Naive thymus-derived CD4-positive, alpha-beta T cell (primary cell): ENCODE measurements at regions of chr4 and their contacts with region 1.

Region 1: GRCh38 chr4:102826890-102827673 is at the start of gene UBE2D3:
- DNase-seq: peak; percentile 92 to 97 (median 95)
- ATAC-seq: peak; percentile 72
- H3K4me3 ChIP-seq: peak within 1 kb of the TSS; percentile 82
- H3K4me3 Mint-ChIP-seq: no peak within 1 kb of the TSS
- H3K27ac ChIP-seq: peak within 1 kb of the TSS; percentile 99
- H3K27ac Mint-ChIP-seq: no peak within 1 kb of the TSS
- H3K4me1 ChIP-seq: peaks cover 19 to 24% of the 10 kb centered on the region in 2 donors
- H3K4me1 Mint-ChIP-seq: peaks cover 24 to 46% (median 40%) of the 10 kb centered on the region in 7 donors
- H3K27me3 ChIP-seq: no peaks in the 10 kb centered on the region
- H3K27me3 Mint-ChIP-seq: peaks cover 0 to 2% (median 0%) of the 10 kb centered on the region in 5 donors
- total RNA-seq, gene UBE2D3: 339 to 556 (median 413) TPM

Region 2: DNA sequence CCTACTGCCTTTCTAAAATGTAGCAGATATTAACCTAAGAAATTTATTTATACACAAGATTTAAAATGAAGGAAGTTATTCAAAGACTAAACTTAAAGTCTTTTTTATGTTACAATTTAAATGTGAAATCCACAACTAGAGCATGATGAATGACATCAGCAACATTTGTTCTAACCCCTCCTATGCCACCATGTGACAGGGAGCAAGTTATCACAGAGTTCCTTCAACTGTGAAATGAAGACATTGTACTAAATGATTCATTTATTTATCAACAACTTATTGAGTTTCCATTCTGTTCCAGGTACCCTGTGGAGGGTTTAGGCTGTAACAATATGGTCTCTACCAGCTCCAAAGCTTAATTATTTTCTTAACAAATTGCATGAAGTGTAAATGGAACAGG is 558.7 kb before region 1 on chr4:
- CTCF ChIA-PET with region 1: no interaction called
- POLR2A ChIA-PET with region 1: no interaction called
- intact Hi-C with region 1: no loop called
- DNase-seq: no peak
- ATAC-seq: no peak
- H3K4me3 ChIP-seq: no peak overlapping the region
- H3K4me3 Mint-ChIP-seq: no peak overlapping the region
- H3K27ac ChIP-seq: no peak overlapping the region
- H3K27ac Mint-ChIP-seq: no peak overlapping the region
- H3K4me1 ChIP-seq: no peaks in the 10 kb centered on the region
- H3K4me1 Mint-ChIP-seq: peaks cover 0 to 11% (median 3%) of the 10 kb centered on the region in 7 donors
- H3K27me3 ChIP-seq: no peaks in the 10 kb centered on the region
- H3K27me3 Mint-ChIP-seq: no peaks in the 10 kb centered on the region

Region 3: GRCh38 chr4:102335616-102336015 is 491.5 kb before region 1 on chr4:
- CTCF ChIA-PET with region 1: no interaction called
- POLR2A ChIA-PET with region 1: no interaction called
- intact Hi-C with region 1: no loop called
- DNase-seq: peak in 2 of 9 donors; percentile 3 to 22
- ATAC-seq: no peak
- H3K4me3 ChIP-seq: no peak overlapping the region
- H3K4me3 Mint-ChIP-seq: peak overlapping the region in 3 of 10 donors; percentile 13 to 18 (median 18)
- H3K27ac ChIP-seq: no peak overlapping the region
- H3K27ac Mint-ChIP-seq: peak overlapping the region in 1 of 9 donors; percentile 16
- H3K4me1 ChIP-seq: peaks cover 0 to 9% of the 10 kb centered on the region in 2 donors
- H3K4me1 Mint-ChIP-seq: peaks cover 32 to 83% (median 77%) of the 10 kb centered on the region in 7 donors
- H3K27me3 ChIP-seq: no peaks in the 10 kb centered on the region
- H3K27me3 Mint-ChIP-seq: no peaks in the 10 kb centered on the region

Region 4: DNA sequence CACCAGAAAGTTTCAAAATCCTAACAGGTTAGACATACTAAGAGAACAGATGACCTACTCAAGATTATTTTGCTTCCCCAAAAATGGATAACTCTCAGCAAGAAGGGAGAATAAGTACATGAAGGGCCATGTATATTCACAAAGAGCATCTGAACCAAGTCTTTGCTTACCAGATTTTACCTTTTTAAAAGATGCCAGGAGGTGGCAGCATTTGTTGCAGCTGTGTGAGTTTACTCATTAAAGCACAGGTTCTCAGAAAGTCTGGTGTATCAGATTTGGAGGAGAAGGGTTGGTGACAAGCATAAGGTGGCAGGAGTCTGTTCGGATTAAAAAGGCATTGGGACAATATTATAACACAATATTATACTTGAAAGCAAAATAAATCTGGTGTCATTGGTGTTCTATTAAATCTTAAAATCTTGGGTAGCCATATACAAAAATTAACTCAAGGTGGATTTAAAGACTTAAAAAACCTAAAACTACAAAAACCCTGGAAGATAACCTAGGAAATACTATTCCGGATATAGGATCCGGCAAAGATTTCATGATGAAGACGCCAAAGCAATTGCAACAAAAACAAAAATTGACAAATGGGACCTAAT is 377.2 kb before region 1 on chr4:
- CTCF ChIA-PET with region 1: interaction called, 6 read pairs
- POLR2A ChIA-PET with region 1: no interaction called
- intact Hi-C with region 1: loop called (anchors 5 kb)
- DNase-seq: peak in 7 of 9 donors; percentile 52 to 78 (median 71)
- ATAC-seq: peak; percentile 85
- H3K4me3 ChIP-seq: no peak overlapping the region
- H3K4me3 Mint-ChIP-seq: no peak overlapping the region
- H3K27ac ChIP-seq: no peak overlapping the region
- H3K27ac Mint-ChIP-seq: peak overlapping the region in 2 of 9 donors; percentile 16 to 56
- H3K4me1 ChIP-seq: no peaks in the 10 kb centered on the region
- H3K4me1 Mint-ChIP-seq: peaks cover 2 to 48% (median 9%) of the 10 kb centered on the region in 7 donors
- H3K27me3 ChIP-seq: no peaks in the 10 kb centered on the region
- H3K27me3 Mint-ChIP-seq: peaks cover 0 to 5% (median 0%) of the 10 kb centered on the region in 5 donors

Region 5: DNA sequence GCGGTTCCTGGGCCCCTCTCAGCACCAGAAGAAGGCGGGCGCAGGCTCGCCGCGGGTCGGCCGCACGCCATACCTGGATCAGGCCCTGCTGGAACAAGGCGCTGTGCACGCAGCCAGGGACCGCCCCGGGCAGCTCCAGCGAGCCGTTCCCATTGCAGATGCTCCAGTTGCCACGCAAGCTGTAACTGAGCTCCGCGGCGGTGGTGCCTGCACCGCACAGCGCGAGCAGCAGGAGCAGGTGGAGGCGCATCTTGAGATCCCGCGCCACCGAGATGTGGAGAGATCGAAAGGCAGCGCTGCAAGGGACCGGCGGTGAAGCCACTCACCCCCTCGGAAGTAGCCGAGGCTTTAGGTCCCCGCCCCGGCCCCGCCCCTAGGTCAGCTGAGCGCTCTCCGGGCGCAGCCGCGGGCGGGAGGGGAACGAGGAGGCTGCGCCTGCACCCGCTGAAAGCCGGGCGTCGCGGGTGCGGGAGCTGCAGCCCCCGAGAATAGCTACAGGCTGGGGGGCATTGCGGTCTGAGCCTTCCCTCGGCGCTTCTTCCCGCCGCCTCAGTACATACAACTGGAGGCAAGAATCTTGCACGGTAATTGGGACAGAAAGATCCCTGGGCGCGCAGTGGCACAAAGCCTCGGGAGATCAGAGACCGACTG is 66.3 kb before region 1 on chr4 and contains the start of gene MANBA:
- CTCF ChIA-PET with region 1: interaction called, 6 read pairs
- POLR2A ChIA-PET with region 1: interaction called, 45 read pairs
- intact Hi-C with region 1: loop called (anchors 1 kb)
- DNase-seq: peak; percentile 62 to 81 (median 73)
- ATAC-seq: peak; percentile 91
- H3K4me3 ChIP-seq: peak within 1 kb of the TSS; percentile 62
- H3K4me3 Mint-ChIP-seq: peak within 1 kb of the TSS; percentile 86 to 99 (median 98)
- H3K27ac ChIP-seq: peak within 1 kb of the TSS; percentile 72
- H3K27ac Mint-ChIP-seq: peak within 1 kb of the TSS; percentile 56 to 92 (median 84)
- H3K4me1 ChIP-seq: peaks cover 4 to 16% of the 10 kb centered on the region in 2 donors
- H3K4me1 Mint-ChIP-seq: peaks cover 35 to 50% (median 42%) of the 10 kb centered on the region in 7 donors
- H3K27me3 ChIP-seq: no peaks in the 10 kb centered on the region
- H3K27me3 Mint-ChIP-seq: peaks cover 0 to 13% (median 0%) of the 10 kb centered on the region in 5 donors
- total RNA-seq, gene MANBA: 15.7 to 56.4 (median 29.7) TPM

Region 6: GRCh38 chr4:102843273-102843672 is 16.2 kb after region 1 on chr4:
- CTCF ChIA-PET with region 1: interaction called, 5 read pairs
- POLR2A ChIA-PET with region 1: interaction called, 23 read pairs
- intact Hi-C with region 1: loop called in 1 of 2 experiments (anchors 2 kb)
- DNase-seq: no peak
- ATAC-seq: no peak
- H3K4me3 ChIP-seq: no peak overlapping the region
- H3K4me3 Mint-ChIP-seq: no peak overlapping the region
- H3K27ac ChIP-seq: no peak overlapping the region
- H3K27ac Mint-ChIP-seq: no peak overlapping the region
- H3K4me1 ChIP-seq: no peaks in the 10 kb centered on the region
- H3K4me1 Mint-ChIP-seq: peaks cover 2 to 12% (median 3%) of the 10 kb centered on the region in 7 donors
- H3K27me3 ChIP-seq: no peaks in the 10 kb centered on the region
- H3K27me3 Mint-ChIP-seq: no peaks in the 10 kb centered on the region

Region 7: GRCh38 chr4:103019308-103020124 is 192.4 kb after region 1 on chr4 and contains the start of gene SLC9B1:
- CTCF ChIA-PET with region 1: interaction called, 3 read pairs
- POLR2A ChIA-PET with region 1: interaction called, 12 read pairs
- intact Hi-C with region 1: loop called (anchors 1 kb)
- DNase-seq: peak; percentile 87 to 95 (median 92)
- ATAC-seq: peak; percentile 98
- H3K4me3 ChIP-seq: peak within 1 kb of the TSS; percentile 48
- H3K4me3 Mint-ChIP-seq: peak within 1 kb of the TSS; percentile 84 to 98 (median 93)
- H3K27ac ChIP-seq: peak within 1 kb of the TSS; percentile 80
- H3K27ac Mint-ChIP-seq: peak within 1 kb of the TSS in 6 of 9 donors; percentile 96 to 99 (median 98)
- H3K4me1 ChIP-seq: peaks cover 13 to 14% of the 10 kb centered on the region in 2 donors
- H3K4me1 Mint-ChIP-seq: peaks cover 0 to 29% (median 20%) of the 10 kb centered on the region in 7 donors
- H3K27me3 ChIP-seq: no peaks in the 10 kb centered on the region
- H3K27me3 Mint-ChIP-seq: no peaks in the 10 kb centered on the region
- total RNA-seq, gene SLC9B1: 1.4 to 7.2 (median 3.9) TPM

Region 8: DNA sequence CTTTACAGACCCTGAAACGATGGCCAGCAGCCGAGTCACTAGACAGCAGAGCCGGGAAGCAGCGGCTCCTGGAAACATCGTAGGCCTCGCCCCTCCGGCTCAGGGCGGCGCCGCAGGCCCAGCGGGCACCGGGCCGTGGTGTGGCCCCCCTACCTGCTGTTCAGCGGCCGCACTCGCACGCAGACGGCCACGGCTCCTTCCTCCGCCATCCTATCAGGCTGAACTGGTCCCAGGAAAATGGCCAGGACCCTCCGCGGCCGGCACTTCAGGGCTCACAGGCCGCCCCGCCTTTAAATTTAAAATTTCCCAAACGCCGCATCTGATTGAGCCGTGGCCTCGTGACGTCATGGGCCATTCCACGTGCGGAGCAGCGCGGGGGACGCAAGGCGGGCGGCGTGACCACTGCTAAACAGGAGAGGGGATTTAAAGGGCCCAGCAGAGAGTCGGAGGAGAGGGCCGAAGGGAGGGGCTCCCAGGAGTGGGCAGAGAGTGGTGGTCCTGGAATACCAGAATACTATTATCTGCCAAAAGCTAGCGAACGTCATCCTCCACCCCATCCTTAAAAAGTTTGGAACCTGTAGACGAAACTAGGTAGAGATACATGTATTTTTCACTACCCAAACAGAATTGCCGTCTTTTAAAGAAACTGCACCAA is 371.2 kb after region 1 on chr4 and contains the start of gene CENPE:
- CTCF ChIA-PET with region 1: no interaction called
- POLR2A ChIA-PET with region 1: no interaction called
- intact Hi-C with region 1: loop called (anchors 1 to 2 kb)
- DNase-seq: peak; percentile 77 to 90 (median 87)
- ATAC-seq: peak; percentile 93
- H3K4me3 ChIP-seq: peak within 1 kb of the TSS; percentile 95
- H3K4me3 Mint-ChIP-seq: peak within 1 kb of the TSS; percentile 81 to 99 (median 96)
- H3K27ac ChIP-seq: peak within 1 kb of the TSS; percentile 91
- H3K27ac Mint-ChIP-seq: peak within 1 kb of the TSS; percentile 87 to 100 (median 99)
- H3K4me1 ChIP-seq: peaks cover 0 to 6% of the 10 kb centered on the region in 2 donors
- H3K4me1 Mint-ChIP-seq: peaks cover 6 to 29% (median 10%) of the 10 kb centered on the region in 7 donors
- H3K27me3 ChIP-seq: no peaks in the 10 kb centered on the region
- H3K27me3 Mint-ChIP-seq: peaks cover 0 to 21% (median 7%) of the 10 kb centered on the region in 5 donors
- total RNA-seq, gene CENPE: 1.1 to 35.8 (median 1.5) TPM